ENCODE measurements at regions of chr10 and their contacts with region 1.

Region 1: GRCh38 chr10:114648368-114648767 is 9.7 kb downstream of the ABLIM1 start:
- DNase-seq: peak; percentile 50 to 51
- ATAC-seq: peak; percentile 77 to 81; a peak in 4 of 6 replicates
- H3K4me3 ChIP-seq: no peak overlapping the region
- H3K27ac ChIP-seq: peak overlapping the region; percentile 59 to 80
- H3K4me1 ChIP-seq: peaks cover 63% of the 10 kb centered on the region
- CTCF ChIP-seq: no peak
- EP300 ChIP-seq: no peak
- POLR2A ChIP-seq: no peak
- RAD21 ChIP-seq: 0 out of 5 replicates have a peak, but pooled peaks of 1 of the 2 experiments have one; percentile 14

Region 2: GRCh38 chr10:114631666-114632417 is 16.5 kb before region 1 on chr10:
- CTCF ChIA-PET with region 1: interaction called, 11 read pairs
- POLR2A ChIA-PET with region 1: interaction called, 3 read pairs
- DNase-seq: peak in 1 of 2 experiments; percentile 33
- ATAC-seq: peak; percentile 54 to 62
- H3K4me3 ChIP-seq: peak overlapping the region; percentile 58
- H3K27ac ChIP-seq: peak overlapping the region; percentile 52 to 84
- H3K4me1 ChIP-seq: peaks cover 54% of the 10 kb centered on the region
- CTCF ChIP-seq: no peak
- EP300 ChIP-seq: no peak
- POLR2A ChIP-seq: no peak
- RAD21 ChIP-seq: no peak; a peak in 1 of 5 replicates